ENCODE measurements at regions of chr16 and their contacts with region 1.

Region 1: DNA sequence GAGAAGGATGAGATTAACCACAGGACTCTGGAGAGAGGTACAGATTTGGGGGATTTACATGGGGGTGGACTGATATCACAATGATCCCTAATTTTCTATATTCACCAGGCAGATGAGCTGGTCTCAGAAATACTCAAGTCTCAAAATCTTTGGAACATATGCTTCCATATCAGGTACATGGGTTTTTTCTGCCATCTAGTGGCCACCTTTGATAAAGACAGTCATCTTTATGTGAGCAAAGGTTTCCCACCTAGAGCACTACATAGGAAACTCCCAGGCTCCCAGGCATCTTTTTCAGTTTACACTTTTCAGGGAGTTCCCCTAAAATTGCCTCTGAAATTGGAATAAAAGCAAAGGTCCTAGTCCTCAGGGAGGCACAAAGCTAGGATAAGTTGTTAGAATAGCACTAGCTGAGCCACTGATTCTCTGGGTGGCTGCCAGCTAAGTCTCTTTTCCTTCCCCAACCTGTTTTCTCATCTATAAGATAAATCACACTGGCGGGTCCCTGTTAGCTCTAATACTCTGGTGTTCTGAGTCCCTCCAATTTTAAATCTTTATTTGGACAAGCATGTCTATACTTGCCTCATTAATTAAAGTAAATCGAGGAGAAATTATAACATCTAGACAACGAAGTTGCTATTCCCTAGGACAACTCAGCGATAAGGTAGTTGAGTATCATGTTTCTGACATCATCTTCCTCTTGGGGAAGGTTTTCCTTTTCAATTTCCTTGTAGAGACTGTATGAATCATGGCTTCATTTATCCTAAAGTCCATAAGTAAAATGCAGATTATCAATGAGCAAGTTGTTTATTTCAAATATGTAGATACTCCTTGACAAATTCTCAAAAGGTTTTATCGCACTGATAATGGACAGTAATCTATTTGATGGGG is 19.0 kb upstream of the MON1B start:
- DNase-seq: peak; percentile 21 to 56
- H3K4me3 ChIP-seq: no peak overlapping the region
- H3K27ac ChIP-seq: no peak overlapping the region
- H3K4me1 ChIP-seq: no peaks in the 10 kb centered on the region
- H3K27me3 ChIP-seq: peaks cover 36% of the 10 kb centered on the region
- CTCF ChIP-seq: peak; percentile 88

Region 2: GRCh38 chr16:75789237-75789636 is 1382.8 kb before region 1 on chr16:
- CTCF ChIA-PET with region 1: interaction called, 3 read pairs
- POLR2A ChIA-PET with region 1: no interaction called
- intact Hi-C with region 1: loop called (anchors 1 kb)
- DNase-seq: peak in 1 of 2 experiments; percentile 42
- H3K4me3 ChIP-seq: no peak overlapping the region
- H3K27ac ChIP-seq: no peak overlapping the region
- H3K4me1 ChIP-seq: no peaks in the 10 kb centered on the region
- H3K27me3 ChIP-seq: peaks cover 9% of the 10 kb centered on the region; the same call in 1 of the 2 replicates
- CTCF ChIP-seq: peak; percentile 90

Region 3: GRCh38 chr16:76653390-76654026 is 518.5 kb before region 1 on chr16:
- CTCF ChIA-PET with region 1: no interaction called
- POLR2A ChIA-PET with region 1: no interaction called
- intact Hi-C with region 1: loop called (anchors 10 kb)
- DNase-seq: peak; percentile 4 to 39
- H3K4me3 ChIP-seq: no peak overlapping the region
- H3K27ac ChIP-seq: no peak overlapping the region
- H3K4me1 ChIP-seq: no peaks in the 10 kb centered on the region
- H3K27me3 ChIP-seq: 0 out of 2 replicates have a peak, but pooled peaks cover under 1% of the 10 kb centered on the region
- CTCF ChIP-seq: peak; percentile 70

Region 4: GRCh38 chr16:77133706-77134105 is 38.3 kb before region 1 on chr16:
- CTCF ChIA-PET with region 1: no interaction called
- POLR2A ChIA-PET with region 1: no interaction called
- intact Hi-C with region 1: no loop called
- DNase-seq: no peak
- H3K4me3 ChIP-seq: no peak overlapping the region
- H3K27ac ChIP-seq: no peak overlapping the region
- H3K4me1 ChIP-seq: no peaks in the 10 kb centered on the region
- H3K27me3 ChIP-seq: peaks cover 46% of the 10 kb centered on the region
- CTCF ChIP-seq: no peak

Region 5: DNA sequence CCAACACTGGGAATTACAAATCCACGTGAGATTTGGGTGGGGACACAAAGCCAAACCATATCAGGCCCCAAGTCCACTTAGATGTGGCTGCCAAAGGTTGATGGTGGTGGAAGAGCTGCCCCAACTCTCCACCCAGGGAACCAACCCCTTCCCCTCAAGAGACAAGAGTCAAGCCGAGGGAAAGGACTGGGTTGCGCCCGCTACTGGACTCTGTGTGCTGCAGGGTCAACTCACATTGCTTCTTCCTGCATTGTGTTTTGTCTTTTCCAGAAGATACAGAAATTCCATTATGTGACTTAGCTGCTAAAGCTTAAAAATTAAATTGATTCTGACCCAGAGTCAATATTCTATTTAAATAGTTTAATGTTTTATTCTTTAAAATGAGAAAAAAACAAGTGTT is 204.4 kb after region 1 on chr16:
- CTCF ChIA-PET with region 1: no interaction called
- POLR2A ChIA-PET with region 1: no interaction called
- intact Hi-C with region 1: no loop called
- DNase-seq: no peak
- H3K4me3 ChIP-seq: no peak overlapping the region
- H3K27ac ChIP-seq: no peak overlapping the region
- H3K4me1 ChIP-seq: peaks cover 19% of the 10 kb centered on the region
- H3K27me3 ChIP-seq: 0 out of 2 replicates have a peak, but pooled peaks cover 4% of the 10 kb centered on the region
- CTCF ChIP-seq: peak; percentile 35; the same call in 1 of the 2 replicates

Measured in PC-9 (cell line).